AG04449 (cell line): ENCODE measurements at regions of chr15 and their contacts with region 1.

Region 1: GRCh38 chr15:71386448-71387236 is 271.4 kb downstream of the THSD4 start:
- DNase-seq: no peak
- H3K4me3 ChIP-seq: no peak overlapping the region
- CTCF ChIP-seq: peak; percentile 0

Region 2: DNA sequence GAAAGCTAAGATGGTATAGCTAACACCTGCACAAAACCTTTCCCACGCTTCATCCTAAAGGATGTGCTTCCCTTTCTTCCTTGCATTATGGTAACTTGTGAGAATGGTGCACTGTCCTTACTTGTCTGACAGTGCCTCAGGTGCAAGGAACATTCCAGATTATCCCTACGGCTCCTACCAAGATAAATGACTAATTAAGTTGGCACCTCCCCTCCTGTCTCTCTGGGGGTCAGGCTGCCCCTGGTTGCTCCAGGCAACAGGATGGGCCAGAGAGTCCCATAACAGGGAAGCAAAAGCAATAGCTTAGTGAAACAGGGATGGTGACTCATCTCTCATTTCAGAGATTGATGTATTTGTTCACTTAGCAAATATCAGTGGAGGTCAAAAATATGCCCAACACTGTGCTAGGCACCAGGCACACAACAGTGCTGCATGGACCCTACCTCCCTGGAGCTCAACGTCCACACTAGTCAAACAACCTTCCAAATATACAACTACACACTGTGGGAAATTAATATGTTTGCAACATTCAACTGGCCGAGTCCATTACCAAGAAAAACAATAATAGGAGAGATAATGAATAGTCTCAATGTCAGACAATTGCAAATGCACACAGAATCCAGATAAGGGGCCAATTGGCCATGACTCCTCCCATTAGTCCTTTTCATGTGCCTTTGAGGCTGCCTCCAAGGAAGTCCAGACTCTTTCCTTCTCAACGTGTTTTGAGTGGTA is 1538.0 kb before region 1 on chr15:
- CTCF ChIA-PET with region 1: no interaction called
- POLR2A ChIA-PET with region 1: no interaction called
- DNase-seq: no peak
- H3K4me3 ChIP-seq: no peak overlapping the region
- CTCF ChIP-seq: no peak

Region 3: DNA sequence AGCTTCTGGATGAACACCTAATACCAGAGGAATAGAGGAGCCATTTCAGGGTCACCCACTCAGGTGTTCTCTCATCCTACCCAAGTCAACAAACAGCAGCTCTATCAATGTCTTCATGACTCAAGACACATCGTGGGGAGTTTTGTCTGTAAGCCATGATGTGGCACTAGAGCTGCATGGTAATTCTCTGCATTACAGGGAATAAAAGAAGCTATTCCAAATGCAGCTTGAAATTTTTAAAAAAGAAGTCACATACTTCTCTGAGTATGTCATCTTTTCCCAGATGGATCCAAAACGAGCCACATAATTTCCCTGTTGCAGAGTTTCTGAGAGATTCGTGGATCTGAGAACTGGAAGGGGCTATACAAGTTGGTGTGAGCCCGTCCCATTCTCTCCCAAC is 277.5 kb before region 1 on chr15:
- CTCF ChIA-PET with region 1: interaction called, 25 read pairs
- POLR2A ChIA-PET with region 1: no interaction called
- DNase-seq: peak; percentile 58
- H3K4me3 ChIP-seq: no peak overlapping the region
- CTCF ChIP-seq: peak; percentile 41

Region 4: GRCh38 chr15:71114896-71115554 is 271.6 kb before region 1 on chr15 and contains the start of gene THSD4:
- CTCF ChIA-PET with region 1: interaction called, 25 read pairs
- POLR2A ChIA-PET with region 1: interaction called, 3 read pairs
- DNase-seq: no peak
- H3K4me3 ChIP-seq: peak within 1 kb of the TSS; percentile 64
- CTCF ChIP-seq: peak; percentile 98

Region 5: DNA sequence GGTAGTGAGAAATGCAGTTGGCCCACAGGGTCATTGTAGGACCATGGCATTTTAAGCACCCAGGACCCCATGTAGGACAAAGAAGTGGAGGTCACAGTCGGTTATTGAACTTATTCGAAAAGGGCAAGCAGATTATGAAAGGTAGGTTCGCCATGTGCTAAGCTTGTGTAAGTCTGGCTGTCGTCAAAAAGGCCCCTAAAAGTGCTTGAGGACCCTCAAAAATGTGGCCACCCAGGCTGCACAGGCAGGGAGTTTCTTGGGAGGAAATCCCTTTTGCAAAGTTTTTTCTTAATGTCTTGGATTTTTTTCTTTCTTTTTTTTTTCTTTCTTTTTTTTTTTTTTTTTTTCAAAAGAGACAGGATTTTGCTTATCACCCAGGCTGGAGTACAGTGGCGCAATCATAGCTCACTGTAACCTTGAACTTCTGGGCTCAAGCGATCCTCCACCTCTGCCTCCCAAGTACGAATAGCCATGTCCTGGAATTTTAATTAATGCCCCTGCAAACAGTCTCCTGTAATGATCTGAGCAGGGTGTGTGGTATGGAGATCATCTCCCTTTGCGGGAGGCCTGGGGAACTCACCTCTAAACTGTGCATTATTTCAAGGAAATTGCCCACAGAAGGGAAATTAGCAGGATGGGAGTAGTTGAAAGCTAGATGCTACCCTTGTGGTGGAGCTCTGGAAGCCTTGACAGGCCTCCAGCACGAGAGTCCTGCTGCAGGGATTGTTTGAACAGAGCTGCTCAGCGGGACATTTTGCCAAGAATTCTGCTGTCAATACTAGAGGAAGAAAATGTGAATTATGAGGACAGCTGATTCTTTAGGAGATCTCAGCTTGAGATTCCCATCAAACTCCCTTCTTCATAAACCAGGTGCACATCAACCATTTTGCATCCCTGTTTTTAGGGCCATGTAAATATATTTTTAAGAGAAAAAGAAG is 243.0 kb before region 1 on chr15:
- CTCF ChIA-PET with region 1: no interaction called
- POLR2A ChIA-PET with region 1: no interaction called
- DNase-seq: no peak
- H3K4me3 ChIP-seq: no peak overlapping the region
- CTCF ChIP-seq: no peak

Region 6: GRCh38 chr15:71357321-71357732 is 29.3 kb before region 1 on chr15:
- CTCF ChIA-PET with region 1: no interaction called
- POLR2A ChIA-PET with region 1: no interaction called
- DNase-seq: no peak
- H3K4me3 ChIP-seq: no peak overlapping the region
- CTCF ChIP-seq: no peak

Region 7: DNA sequence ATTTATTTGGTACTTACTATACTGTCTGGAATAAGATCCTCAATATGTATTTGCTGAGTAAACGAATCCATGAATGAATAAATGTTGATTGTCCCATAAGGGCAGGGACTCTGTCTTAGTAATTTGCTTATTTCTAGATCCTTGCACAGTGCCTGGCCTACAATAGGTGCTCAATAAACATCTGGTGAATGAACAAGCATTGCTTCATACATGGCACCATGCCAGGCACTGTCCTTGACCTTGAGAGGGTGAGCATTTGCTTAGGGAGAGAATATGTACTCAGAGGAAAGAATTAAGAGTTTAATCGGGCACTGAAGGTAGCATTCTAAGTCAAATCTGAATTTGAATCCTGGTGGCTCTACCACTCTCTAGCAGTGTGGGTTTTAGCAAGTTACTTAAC is 10.7 kb after region 1 on chr15:
- CTCF ChIA-PET with region 1: interaction called, 25 read pairs
- POLR2A ChIA-PET with region 1: no interaction called
- DNase-seq: no peak
- H3K4me3 ChIP-seq: no peak overlapping the region
- CTCF ChIP-seq: no peak

Region 8: DNA sequence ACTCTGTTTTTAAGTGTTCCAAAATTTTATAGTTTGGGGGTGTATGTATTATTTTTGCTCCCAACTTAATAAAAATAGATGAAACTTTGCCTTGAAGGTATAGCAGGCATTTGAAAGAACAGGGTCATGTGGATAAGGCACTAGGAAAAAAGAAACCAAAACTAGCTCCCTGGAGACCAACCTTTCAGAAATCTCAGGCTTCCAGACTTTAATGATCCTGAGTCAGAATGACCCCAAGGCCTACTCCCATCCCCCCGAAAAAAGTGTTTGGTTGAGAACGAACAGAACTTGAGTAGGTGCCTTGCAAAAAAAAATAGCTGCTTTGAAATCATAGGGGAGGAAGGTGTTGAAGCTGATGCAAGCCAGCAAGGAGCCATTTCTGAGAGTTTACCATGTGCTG is 38.1 kb after region 1 on chr15:
- CTCF ChIA-PET with region 1: interaction called, 13 read pairs
- POLR2A ChIA-PET with region 1: no interaction called
- DNase-seq: no peak
- H3K4me3 ChIP-seq: no peak overlapping the region
- CTCF ChIP-seq: no peak

Region 9: DNA sequence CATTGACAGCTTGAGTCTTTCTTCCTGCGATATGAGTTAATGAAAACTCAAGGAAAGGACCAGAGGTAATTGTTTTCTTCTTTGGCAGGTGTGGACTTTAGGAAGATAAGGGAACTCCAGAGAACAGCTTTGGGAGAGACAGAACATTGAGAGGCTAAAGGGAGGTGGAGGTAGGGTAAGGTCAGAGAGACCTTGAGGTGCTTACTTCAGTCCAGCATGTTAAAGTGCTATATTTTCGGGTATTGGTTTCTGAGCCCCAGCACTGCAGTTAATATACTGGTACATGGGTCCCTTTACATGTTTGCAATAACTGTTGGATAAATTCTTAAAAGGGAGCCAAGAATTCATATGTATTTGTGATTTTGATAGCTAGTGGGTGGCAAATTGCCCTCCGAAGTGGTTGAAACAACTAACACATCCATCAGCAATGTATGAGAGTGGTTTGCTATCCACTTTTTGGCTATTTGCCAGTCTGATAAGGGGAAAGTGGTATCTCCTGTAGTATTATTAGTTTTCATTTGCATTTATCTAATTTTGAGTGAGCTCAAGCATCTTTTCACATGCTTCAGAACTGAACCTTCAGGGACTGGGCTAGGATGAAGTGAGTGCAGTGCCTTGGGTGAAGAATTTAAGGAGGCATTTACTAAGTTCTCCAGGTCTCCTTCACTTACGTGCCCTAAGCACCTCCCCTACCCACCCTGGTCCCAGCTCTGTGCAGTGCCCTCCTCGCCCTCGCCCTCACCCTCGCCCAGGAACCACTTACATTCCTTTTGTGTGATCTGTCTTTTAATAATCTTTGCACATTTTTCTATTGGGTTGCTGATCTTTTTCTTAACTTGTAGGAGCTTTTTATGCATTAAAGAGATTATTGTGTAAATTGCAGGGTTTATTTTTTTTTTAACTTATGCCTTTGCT is 51.0 kb after region 1 on chr15:
- CTCF ChIA-PET with region 1: interaction called, 97 read pairs
- POLR2A ChIA-PET with region 1: no interaction called
- DNase-seq: no peak
- H3K4me3 ChIP-seq: no peak overlapping the region
- CTCF ChIP-seq: no peak

Region 10: DNA sequence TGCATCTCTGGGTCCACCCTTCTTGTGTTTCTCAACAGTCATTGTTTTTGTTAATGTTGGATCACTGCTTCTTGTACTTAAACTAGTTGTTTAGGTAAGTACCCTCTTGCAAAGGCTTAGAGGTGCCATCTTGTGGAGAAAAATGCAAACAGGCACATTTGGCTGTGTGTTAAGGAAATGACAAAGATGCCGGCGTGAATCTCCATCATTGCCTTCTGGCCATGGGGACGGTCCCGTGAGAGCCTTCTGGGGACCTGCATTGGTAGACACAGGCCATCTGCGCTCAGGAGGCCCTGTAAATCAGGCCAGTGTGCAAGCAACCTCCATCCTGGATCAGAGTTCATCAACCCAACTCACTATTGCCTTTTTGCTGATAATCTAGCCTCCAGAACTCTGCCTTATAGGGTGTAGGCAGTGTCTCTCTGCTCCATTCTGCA is 265.1 kb after region 1 on chr15:
- CTCF ChIA-PET with region 1: interaction called, 15 read pairs
- POLR2A ChIA-PET with region 1: no interaction called
- DNase-seq: peak; percentile 69
- H3K4me3 ChIP-seq: no peak overlapping the region
- CTCF ChIP-seq: peak; percentile 63

Region 11: DNA sequence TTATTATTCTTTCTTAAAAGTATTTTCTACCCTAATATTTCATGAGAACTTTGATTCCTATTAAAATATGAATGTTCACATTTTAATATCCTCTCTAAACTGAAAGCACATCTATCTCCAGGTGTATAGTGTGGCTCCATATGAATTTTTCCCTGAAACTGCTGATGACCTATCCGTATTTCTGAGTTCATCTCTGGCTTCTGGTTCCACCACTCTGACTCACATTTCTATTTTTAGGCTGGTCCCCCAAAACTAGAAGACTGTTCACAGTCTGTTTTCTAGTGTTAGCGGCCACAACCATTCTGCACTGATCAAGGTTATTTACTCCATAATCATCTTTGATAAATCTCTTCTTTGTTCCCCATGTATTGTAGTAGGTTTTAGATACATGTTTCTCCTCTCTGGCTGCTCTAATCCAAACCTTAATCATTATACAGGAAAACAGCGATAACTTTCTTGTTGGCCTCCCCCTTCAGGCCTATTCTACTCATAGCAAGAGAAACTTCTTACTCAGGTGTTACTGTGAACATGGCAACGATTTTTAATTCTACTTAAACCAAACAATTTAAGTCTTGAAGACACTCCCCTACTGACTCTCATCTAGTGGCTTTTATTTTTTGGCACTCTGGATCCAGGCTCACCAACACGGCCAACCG is 1384.2 kb after region 1 on chr15:
- CTCF ChIA-PET with region 1: no interaction called
- POLR2A ChIA-PET with region 1: no interaction called
- DNase-seq: no peak
- H3K4me3 ChIP-seq: no peak overlapping the region
- CTCF ChIP-seq: peak; percentile 4